Vagina (tissue), 2 donors: ENCODE measurements at regions of chr6 and their contacts with region 1.

Region 1: DNA sequence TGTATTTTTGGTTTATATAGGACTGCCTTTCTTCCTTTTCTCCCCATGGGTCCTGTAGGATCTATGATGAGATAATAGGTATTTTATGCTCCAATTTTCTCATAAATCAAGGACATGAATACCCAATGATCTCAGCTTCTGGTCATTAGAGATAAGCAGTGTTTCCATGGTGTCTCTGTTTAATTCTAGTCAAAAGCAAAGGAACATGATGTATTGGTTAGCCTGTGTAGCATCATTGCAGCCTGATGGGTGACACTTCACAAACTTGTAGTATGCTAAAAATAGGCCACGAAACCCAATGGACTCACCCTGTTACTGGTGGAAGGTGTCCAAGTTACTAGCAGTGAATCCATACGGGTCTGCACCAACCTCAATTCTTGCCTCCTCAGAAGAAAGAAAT is 116.2 kb upstream of the SNX9 start:
- DNase-seq: no peak
- H3K4me3 ChIP-seq: no peak overlapping the region
- H3K27ac ChIP-seq: no peak overlapping the region
- H3K4me1 ChIP-seq: no peaks in the 10 kb centered on the region
- H3K27me3 ChIP-seq: no peaks in the 10 kb centered on the region
- CTCF ChIP-seq: no peak
- POLR2A ChIP-seq: no peak

Region 2: GRCh38 chr6:157721437-157722229 is 14.8 kb after region 1 on chr6:
- intact Hi-C with region 1: loop called (anchors 2 kb)
- DNase-seq: peak in 1 of 2 donors; percentile 69
- H3K4me3 ChIP-seq: no peak overlapping the region
- H3K27ac ChIP-seq: no peak overlapping the region
- H3K4me1 ChIP-seq: peaks cover 37% of the 10 kb centered on the region
- H3K27me3 ChIP-seq: no peaks in the 10 kb centered on the region
- CTCF ChIP-seq: no peak
- POLR2A ChIP-seq: no peak

Region 3: GRCh38 chr6:157741948-157742556 is 35.2 kb after region 1 on chr6:
- intact Hi-C with region 1: no loop called
- DNase-seq: no peak
- H3K4me3 ChIP-seq: peak overlapping the region in 1 of 2 donors; percentile 9
- H3K27ac ChIP-seq: peak overlapping the region; percentile 57
- H3K4me1 ChIP-seq: peaks cover 24% of the 10 kb centered on the region
- H3K27me3 ChIP-seq: no peaks in the 10 kb centered on the region
- CTCF ChIP-seq: no peak
- POLR2A ChIP-seq: no peak